ENCODE measurements at regions of chr18 and their contacts with region 1.

Region 1: DNA sequence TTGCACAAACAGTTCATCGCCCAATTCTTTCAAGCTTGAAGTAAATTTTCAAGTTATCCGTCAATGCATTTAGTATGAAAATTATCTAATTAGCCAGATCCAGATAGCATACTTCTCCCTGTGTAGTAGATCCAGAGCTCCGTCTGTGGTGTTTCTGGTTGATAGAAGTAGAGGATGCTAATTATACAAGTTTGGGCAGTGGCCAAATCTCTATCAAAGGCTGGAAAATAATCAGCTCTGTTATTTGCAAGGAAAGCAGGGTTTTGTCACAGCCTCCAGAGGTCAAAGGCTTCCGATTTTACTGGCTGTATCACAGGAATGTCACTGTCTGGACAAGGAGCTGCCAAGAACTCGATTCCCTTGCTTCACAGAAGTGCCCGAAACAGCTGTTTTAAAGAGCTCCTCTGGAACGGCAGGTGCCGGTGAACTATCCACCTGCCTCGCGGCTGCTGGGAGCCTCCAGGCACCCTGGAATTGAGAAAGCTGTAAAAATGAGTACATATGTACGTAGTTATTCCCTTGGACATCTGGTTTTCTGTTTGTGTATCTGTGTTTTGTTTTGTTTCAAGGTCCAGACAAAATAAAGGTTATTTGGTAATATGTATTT is 28.7 kb downstream of the LRRC30 start:
- DNase-seq: no peak
- ATAC-seq: no peak
- H3K4me3 ChIP-seq: no peak overlapping the region
- H3K27ac ChIP-seq: no peak overlapping the region
- H3K4me1 ChIP-seq: peaks cover 10% of the 10 kb centered on the region
- H3K27me3 ChIP-seq: no peaks in the 10 kb centered on the region
- CTCF ChIP-seq: no peak

Region 2: GRCh38 chr18:7221424-7222155 is 38.0 kb before region 1 on chr18:
- intact Hi-C with region 1: loop called in 1 of 2 experiments (anchors 5 kb)
- DNase-seq: peak in 1 of 2 donors; percentile 55
- ATAC-seq: peak; percentile 86 to 99 (median 96)
- H3K4me3 ChIP-seq: no peak overlapping the region
- H3K27ac ChIP-seq: no peak overlapping the region
- H3K4me1 ChIP-seq: peaks cover 9% of the 10 kb centered on the region
- H3K27me3 ChIP-seq: no peaks in the 10 kb centered on the region
- CTCF ChIP-seq: peak; percentile 81

Region 3: DNA sequence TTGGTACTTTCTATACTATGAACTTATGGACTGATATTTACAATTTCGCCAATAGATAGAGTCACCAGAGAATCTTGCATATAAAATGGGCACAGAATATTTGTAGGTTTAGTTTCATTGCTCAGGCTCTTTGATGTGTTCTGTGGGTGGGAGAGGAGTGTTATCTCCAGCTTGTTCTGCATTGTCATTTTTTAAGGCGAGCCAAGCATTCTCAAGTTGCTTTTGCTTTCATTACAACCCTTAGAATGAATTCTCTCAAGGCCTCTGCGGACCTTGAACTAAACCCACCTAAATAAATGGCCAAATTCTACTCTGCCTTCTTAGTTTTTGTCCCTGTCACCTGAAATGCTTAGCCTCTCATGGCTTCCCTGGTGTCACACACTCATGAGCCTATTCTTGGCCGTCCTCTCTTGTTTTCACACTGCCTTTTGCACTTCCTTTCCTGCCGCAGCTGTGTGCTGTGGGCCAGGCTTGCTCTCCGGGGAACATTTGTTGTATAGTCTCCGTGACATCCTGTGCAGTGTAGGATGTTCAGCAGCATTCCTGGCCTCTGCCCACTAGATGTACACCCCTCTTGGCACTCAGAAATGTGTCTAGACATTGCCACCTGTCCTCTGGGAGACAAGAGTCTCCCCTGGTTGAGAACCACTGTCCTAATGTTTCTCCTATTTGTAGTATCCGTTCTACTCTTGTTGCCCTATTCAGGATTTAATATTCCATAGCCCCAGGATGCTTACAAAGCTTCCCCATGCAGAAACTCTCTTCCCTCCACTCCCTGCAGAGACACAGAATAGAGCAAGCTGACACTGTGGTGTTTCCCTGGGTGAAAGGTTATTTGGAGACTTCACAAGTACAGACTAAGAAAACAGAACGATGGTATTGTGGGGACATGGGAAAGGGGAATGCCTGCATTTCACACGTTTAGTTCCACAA is 563.1 kb after region 1 on chr18:
- intact Hi-C with region 1: loop called in 1 of 2 experiments (anchors 5 kb)
- DNase-seq: no peak
- ATAC-seq: peak; percentile 53 to 73 (median 68)
- H3K4me3 ChIP-seq: peak overlapping the region; percentile 26
- H3K27ac ChIP-seq: peak overlapping the region; percentile 71
- H3K4me1 ChIP-seq: peaks cover 34% of the 10 kb centered on the region
- H3K27me3 ChIP-seq: no peaks in the 10 kb centered on the region
- CTCF ChIP-seq: no peak

Measured in psoas muscle (tissue), 8 donors.